ENCODE measurements at regions of chr13 and their contacts with region 1.

Region 1: GRCh38 chr13:43648733-43649132 is 138.0 kb downstream of the ENOX1 start:
- DNase-seq: no peak
- CTCF ChIP-seq: no peak

Region 2: GRCh38 chr13:43572656-43573367 is 75.9 kb before region 1 on chr13:
- CTCF ChIA-PET with region 1: no interaction called
- POLR2A ChIA-PET with region 1: no interaction called
- DNase-seq: no peak
- CTCF ChIP-seq: no peak

Region 3: DNA sequence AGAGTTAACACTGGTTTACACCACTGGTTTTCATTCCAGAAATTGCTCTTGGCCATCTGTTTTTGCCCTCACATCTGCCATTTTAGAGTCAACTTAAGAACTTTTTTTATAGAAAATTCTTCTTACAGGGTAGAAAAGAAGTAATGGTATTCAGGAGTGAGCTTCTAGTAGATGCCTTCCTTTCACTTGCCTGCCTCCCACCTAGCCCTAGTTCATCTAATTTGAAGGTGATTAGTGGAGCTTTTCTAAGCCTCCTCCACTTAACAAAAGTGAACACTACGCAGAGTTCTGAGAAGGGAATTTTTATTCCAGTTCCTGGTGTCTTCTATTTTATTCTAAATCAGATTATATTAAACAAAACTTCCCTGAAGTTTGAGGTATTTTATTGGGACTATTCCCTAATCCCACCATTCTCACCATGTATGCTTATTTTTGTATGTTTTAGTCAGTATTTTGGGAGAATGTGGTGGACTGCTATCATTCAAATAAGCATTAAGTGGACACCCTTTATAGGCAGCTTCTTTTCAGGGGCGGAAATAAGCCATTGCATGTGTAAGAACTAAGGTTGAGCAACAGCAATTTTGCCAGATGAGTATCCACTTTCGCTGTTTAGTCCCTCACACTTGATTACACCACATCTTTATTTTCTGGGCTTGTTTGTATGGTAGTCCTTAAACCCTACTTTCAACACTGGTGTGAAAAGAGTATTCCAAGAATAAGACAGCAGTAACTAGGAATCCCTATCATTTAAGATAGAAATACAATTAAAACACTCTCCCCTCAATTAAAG is 18.8 kb before region 1 on chr13:
- CTCF ChIA-PET with region 1: interaction called, 15 read pairs
- POLR2A ChIA-PET with region 1: no interaction called
- DNase-seq: no peak
- CTCF ChIP-seq: no peak

Region 4: GRCh38 chr13:43669964-43670363 is 21.2 kb after region 1 on chr13:
- CTCF ChIA-PET with region 1: no interaction called
- POLR2A ChIA-PET with region 1: no interaction called
- DNase-seq: no peak
- CTCF ChIP-seq: no peak

Measured in GM10248 (cell line).